ENCODE measurements at regions of chr15 and their contacts with region 1.

Region 1: DNA sequence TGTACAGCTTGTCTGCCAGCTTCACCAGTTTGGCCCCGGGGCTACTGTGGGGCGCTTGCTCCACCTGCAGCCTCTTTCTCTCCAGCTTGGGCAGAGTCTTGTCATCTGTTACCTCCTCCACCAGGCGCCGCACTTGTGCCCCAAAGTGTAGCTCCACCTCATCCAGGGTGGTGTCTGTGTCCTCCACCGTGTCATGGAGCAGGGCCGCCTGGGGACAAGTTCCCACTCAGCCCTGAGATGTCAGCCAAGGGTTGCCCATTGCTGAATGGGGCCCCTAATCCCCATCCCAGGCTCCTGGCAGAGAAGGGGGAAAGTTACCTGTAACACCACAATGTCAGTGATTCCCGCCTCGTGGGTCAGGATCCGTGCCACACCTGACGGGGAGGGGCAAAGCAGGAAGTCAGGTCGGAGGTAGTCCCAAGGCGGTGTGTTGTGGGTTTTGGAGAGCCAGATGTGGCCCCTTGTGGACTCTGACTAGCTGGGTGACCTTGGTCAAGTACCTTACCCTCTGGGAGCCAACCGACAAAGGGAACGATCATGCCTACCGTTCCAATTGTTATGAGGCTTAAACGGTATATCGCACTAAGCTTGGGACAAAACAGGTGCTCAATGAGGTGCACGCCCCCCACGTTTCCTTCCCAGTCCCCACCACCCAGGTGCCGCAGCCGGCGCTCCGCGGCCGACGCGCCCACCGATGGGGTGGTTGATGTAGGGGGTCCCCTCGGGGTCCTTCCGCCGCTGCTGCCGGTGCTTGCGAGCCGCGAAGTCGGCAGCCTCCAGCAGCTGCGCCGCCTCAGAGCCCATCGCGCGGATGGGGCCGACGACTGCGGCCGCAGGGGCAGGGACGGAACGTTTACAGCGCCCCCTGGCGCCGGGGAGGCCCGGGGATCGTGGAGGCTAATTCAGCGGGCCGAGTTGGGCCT is at the start of gene HDDC3:
- DNase-seq: peak; percentile 80 to 98 (median 88)
- ATAC-seq: peak; percentile 72
- H3K4me3 ChIP-seq: peak within 1 kb of the TSS; percentile 97
- H3K4me3 Mint-ChIP-seq: peak within 1 kb of the TSS; percentile 96 to 100 (median 98)
- H3K27ac ChIP-seq: peak within 1 kb of the TSS; percentile 79
- H3K27ac Mint-ChIP-seq: peak within 1 kb of the TSS; percentile 91 to 99 (median 98)
- H3K4me1 ChIP-seq: peaks cover 33 to 50% of the 10 kb centered on the region in 2 donors
- H3K4me1 Mint-ChIP-seq: peaks cover 36 to 63% (median 53%) of the 10 kb centered on the region in 7 donors
- H3K27me3 ChIP-seq: no peaks in the 10 kb centered on the region
- H3K27me3 Mint-ChIP-seq: no peaks in the 10 kb centered on the region
- total RNA-seq, gene HDDC3: 13.3 to 34.2 (median 29.0) TPM

Region 2: DNA sequence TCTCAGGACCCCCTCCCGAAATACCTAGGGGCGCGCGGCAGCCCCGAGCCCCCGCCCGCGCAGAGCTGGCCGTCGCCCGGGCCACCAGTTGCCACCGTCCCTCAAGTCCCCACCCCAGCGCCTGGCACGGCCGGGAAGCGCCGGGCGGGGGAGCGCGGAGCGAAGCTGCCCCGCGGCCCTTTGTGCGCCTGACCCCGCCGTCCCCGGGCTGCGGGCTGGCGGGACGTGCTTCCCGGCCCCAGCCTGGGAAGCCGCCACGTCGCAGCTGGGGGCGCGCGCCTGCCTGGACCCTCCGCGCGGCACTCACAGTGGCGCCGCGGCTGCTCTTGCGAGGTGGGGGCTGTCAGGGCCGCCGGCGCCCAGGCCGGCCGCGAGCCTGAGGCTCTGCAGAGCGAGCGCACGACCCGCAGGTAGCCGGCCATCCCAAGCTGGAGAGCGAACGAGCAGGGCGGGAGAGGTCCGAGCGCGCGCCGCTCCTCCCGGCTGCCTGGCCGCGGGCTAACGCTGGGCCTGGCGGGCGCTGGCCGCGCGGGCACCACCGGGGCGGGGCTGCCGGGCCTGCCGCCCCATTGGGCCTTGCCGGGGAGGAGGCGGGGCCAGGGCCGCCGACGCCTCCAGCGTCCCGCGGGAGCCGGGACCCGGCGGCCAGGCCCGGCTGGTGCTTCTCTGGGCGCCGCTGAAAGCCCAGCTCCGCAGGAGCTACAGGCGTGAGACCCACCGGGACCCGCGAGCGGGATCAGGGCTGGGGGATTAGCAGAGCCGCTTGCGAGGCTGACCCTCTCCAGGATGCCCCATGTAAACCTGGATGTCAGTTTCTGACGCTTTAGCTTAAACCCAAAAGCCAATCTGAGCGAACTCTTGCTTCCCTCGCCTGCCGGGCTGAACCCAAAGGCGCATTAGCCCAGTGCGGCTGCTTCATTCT is 829.8 kb before region 1 on chr15 and contains the start of gene IDH2:
- CTCF ChIA-PET with region 1: no interaction called
- POLR2A ChIA-PET with region 1: interaction called, 4 read pairs
- intact Hi-C with region 1: loop called in 1 of 2 experiments (anchors 5 kb)
- DNase-seq: peak; percentile 60 to 86 (median 74)
- ATAC-seq: peak; percentile 89
- H3K4me3 ChIP-seq: peak within 1 kb of the TSS; percentile 78
- H3K4me3 Mint-ChIP-seq: peak within 1 kb of the TSS; percentile 82 to 97 (median 92)
- H3K27ac ChIP-seq: peak within 1 kb of the TSS; percentile 90
- H3K27ac Mint-ChIP-seq: peak within 1 kb of the TSS; percentile 94 to 99 (median 98)
- H3K4me1 ChIP-seq: peaks cover 38 to 44% of the 10 kb centered on the region in 2 donors
- H3K4me1 Mint-ChIP-seq: peaks cover 43 to 60% (median 52%) of the 10 kb centered on the region in 7 donors
- H3K27me3 ChIP-seq: no peaks in the 10 kb centered on the region
- H3K27me3 Mint-ChIP-seq: peaks cover 0 to 24% (median 0%) of the 10 kb centered on the region in 5 donors
- total RNA-seq, gene IDH2: 32.4 to 230 (median 33.7) TPM

Region 3: DNA sequence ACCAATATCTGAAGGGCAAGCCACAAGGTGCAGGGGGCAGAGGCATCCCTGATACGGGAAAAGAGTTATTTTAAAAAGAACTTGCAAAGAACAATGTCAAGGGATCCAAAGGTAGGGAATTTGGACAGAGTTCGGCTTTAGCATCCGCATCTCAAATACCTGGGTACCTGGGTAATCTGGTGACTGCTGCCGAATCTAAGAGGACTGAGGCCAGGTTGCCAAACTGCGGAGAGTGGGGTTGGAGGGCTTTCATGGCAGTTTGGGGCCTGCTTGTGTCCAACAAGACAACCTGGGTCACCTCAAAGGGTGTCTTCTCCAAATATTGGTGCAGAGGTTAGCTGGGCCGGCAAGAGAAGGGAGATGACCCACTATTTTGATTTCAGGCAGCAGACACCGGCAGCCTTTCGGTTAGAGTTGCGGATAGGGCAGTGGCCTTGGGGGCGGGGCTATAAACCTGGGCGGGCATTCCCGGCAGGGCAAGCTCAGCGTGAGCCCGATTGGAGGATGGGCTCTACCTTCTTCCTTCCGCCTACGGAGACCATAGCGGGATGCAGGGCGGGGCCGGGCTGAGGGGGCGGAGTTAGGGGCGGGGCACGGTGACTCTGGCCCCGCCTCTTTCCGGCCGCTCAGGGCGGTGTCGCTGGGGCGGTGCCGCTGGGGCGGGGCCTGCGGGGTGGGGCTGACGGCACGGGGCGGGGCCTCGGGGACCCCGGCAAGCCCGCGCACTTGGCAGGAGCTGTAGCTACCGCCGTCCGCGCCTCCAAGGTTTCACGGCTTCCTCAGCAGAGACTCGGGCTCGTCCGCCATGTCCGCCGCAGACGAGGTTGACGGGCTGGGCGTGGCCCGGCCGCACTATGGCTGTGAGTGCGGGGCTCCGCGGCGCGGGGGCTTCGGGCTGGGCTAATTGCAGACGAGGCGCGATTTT is 544.2 kb before region 1 on chr15 and contains the start of gene IQGAP1:
- CTCF ChIA-PET with region 1: interaction called, 3 read pairs
- POLR2A ChIA-PET with region 1: no interaction called
- intact Hi-C with region 1: loop called (anchors 1 to 2 kb)
- DNase-seq: peak; percentile 91 to 96 (median 94)
- ATAC-seq: peak; percentile 97
- H3K4me3 ChIP-seq: peak within 1 kb of the TSS; percentile 88
- H3K4me3 Mint-ChIP-seq: peak within 1 kb of the TSS; percentile 80 to 95 (median 92)
- H3K27ac ChIP-seq: peak within 1 kb of the TSS; percentile 93
- H3K27ac Mint-ChIP-seq: peak within 1 kb of the TSS; percentile 68 to 99 (median 94)
- H3K4me1 ChIP-seq: peaks cover 29 to 33% of the 10 kb centered on the region in 2 donors
- H3K4me1 Mint-ChIP-seq: peaks cover 38 to 56% (median 50%) of the 10 kb centered on the region in 7 donors
- H3K27me3 ChIP-seq: no peaks in the 10 kb centered on the region
- H3K27me3 Mint-ChIP-seq: no peaks in the 10 kb centered on the region
- total RNA-seq, gene IQGAP1: 81.8 to 263 (median 93.8) TPM

Region 4: DNA sequence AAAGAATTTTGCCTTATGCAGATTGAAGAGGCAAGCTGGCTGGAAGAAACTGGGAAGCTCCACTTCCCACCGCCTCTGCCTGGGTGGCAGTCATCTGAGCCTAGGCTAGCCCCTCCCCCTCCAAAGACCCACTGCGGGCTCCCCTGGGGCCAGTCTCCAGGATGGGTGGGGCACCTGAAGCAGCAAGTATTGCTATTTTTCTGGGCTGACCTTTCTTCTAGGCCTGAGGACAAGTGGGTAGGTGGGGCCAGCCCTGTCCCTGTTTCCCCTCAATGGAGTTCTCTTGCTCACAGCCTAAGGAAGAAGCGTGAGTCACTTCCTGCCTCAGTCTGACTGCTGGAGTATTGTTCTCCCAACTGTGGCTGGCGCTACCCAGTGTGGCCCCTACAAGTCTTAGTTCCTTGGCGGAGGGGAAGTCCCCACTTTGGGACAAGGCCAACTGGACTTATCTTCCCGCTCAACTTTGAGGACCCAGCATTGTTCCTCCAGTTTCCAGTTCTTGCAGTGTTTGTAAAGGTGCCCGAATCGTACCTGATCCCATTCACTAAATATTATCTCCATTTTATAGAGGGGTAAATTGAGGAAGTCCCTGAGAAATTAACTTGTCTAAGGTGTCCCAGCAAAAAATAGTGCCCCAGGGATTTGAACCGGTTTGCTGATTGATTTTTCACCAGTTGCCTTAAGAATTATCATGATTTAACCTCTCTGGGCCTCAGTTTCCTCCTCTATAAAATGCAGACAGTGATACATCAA is 62.2 kb before region 1 on chr15:
- CTCF ChIA-PET with region 1: no interaction called
- POLR2A ChIA-PET with region 1: interaction called, 7 read pairs
- intact Hi-C with region 1: loop called in 1 of 2 experiments (anchors 1 kb)
- DNase-seq: peak in 1 of 9 donors; percentile 67
- ATAC-seq: peak; percentile 73
- H3K4me3 ChIP-seq: peak overlapping the region; percentile 53
- H3K4me3 Mint-ChIP-seq: peak overlapping the region; percentile 82 to 93 (median 90)
- H3K27ac ChIP-seq: peak overlapping the region; percentile 73
- H3K27ac Mint-ChIP-seq: peak overlapping the region; percentile 82 to 97 (median 92)
- H3K4me1 ChIP-seq: peaks cover 27% of the 10 kb centered on the region in 2 donors
- H3K4me1 Mint-ChIP-seq: peaks cover 22 to 66% (median 45%) of the 10 kb centered on the region in 7 donors
- H3K27me3 ChIP-seq: no peaks in the 10 kb centered on the region
- H3K27me3 Mint-ChIP-seq: no peaks in the 10 kb centered on the region

Region 5: DNA sequence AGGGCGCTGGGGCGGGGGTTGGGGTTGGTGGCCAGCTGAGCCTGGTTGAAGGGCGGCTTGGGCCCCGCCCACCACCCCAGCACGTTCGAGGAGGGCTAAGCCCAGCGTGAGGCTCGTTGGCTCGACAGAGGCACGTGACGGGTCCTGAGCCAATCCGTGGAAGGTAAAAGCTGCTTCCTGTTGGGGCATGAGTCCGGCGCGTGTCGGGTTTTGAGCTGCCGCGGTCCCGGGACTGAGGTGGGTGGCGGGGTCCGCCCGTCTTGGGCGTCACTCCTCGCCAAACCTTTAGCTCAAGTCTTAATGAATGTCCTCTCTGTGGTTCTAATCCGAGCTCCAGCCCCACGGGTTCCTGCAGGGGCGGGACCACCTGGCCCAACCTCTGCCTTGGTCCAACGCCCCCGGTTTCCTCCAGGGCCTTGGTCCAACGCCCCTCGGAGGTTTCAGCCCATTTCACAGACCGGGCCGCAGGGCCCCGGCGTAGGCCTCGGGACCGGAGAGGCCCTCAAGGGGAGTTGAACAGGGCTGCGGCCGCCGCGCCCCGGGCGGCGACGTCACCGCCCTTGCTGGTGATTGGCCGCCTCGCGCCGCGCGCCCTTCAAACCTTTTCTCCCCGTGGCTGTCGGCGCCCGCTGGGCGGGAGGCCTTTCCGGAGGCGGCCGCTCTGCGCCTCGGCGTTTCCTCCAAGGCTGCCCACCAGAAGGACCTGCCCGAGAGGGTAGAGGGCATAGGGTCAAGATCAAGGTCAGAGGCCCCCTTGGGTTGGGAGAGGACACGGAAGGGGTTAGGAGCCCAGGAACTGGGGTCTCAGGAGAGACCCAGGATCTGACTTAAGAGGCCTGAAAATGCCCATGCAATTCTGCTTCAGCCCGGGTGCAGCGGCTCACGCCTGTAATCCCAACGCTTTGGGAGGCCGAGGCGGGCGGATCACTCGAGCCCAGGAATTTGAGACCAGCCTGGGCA is 23.0 kb after region 1 on chr15 and contains the start of gene RCCD1:
- CTCF ChIA-PET with region 1: interaction called, 67 read pairs
- POLR2A ChIA-PET with region 1: interaction called, 119 read pairs
- intact Hi-C with region 1: loop called (anchors 1 kb)
- DNase-seq: peak; percentile 67 to 90 (median 85)
- ATAC-seq: peak; percentile 98
- H3K4me3 ChIP-seq: peak within 1 kb of the TSS; percentile 100
- H3K4me3 Mint-ChIP-seq: peak within 1 kb of the TSS; percentile 81 to 90 (median 87)
- H3K27ac ChIP-seq: peak within 1 kb of the TSS; percentile 98
- H3K27ac Mint-ChIP-seq: peak within 1 kb of the TSS; percentile 76 to 96 (median 94)
- H3K4me1 ChIP-seq: peaks cover 10 to 15% of the 10 kb centered on the region in 2 donors
- H3K4me1 Mint-ChIP-seq: peaks cover 6 to 24% (median 12%) of the 10 kb centered on the region in 7 donors
- H3K27me3 ChIP-seq: no peaks in the 10 kb centered on the region
- H3K27me3 Mint-ChIP-seq: no peaks in the 10 kb centered on the region
- total RNA-seq, gene RCCD1: 5.8 to 24.6 (median 16.3) TPM

Region 6: GRCh38 chr15:91271565-91272153 is 339.7 kb after region 1 on chr15:
- CTCF ChIA-PET with region 1: interaction called, 5 read pairs
- POLR2A ChIA-PET with region 1: no interaction called
- intact Hi-C with region 1: loop called in 1 of 2 experiments (anchors 10 kb)
- DNase-seq: peak in 8 of 9 donors; percentile 34 to 65 (median 52)
- ATAC-seq: peak; percentile 79
- H3K4me3 ChIP-seq: no peak overlapping the region
- H3K4me3 Mint-ChIP-seq: peak overlapping the region in 8 of 10 donors; percentile 34 to 67 (median 53)
- H3K27ac ChIP-seq: no peak overlapping the region
- H3K27ac Mint-ChIP-seq: no peak overlapping the region
- H3K4me1 ChIP-seq: no peaks in the 10 kb centered on the region
- H3K4me1 Mint-ChIP-seq: peaks cover 0 to 11% (median 5%) of the 10 kb centered on the region in 7 donors
- H3K27me3 ChIP-seq: no peaks in the 10 kb centered on the region
- H3K27me3 Mint-ChIP-seq: peaks cover 12 to 40% (median 17%) of the 10 kb centered on the region in 5 donors

Measured in naive thymus-derived CD4-positive, alpha-beta T cell (primary cell).